Caco-2 (cell line): ENCODE measurements at regions of chr3 and their contacts with region 1.

Region 1: GRCh38 chr3:141218162-141218835 is 13.3 kb upstream of the PXYLP1 start:
- DNase-seq: no peak
- H3K4me3 ChIP-seq: no peak overlapping the region
- H3K4me3 Mint-ChIP-seq: no peak overlapping the region
- H3K27ac Mint-ChIP-seq: no peak overlapping the region
- H3K4me1 ChIP-seq: 0 out of 2 replicates have a peak, but pooled peaks cover 5% of the 10 kb centered on the region
- H3K4me1 Mint-ChIP-seq: peaks cover 15% of the 10 kb centered on the region
- H3K27me3 ChIP-seq: no peaks in the 10 kb centered on the region
- H3K27me3 Mint-ChIP-seq: no peaks in the 10 kb centered on the region
- CTCF ChIP-seq: no peak

Region 2: GRCh38 chr3:141049681-141050080 is 168.6 kb before region 1 on chr3:
- CTCF ChIA-PET with region 1: no interaction called
- POLR2A ChIA-PET with region 1: interaction called, 16 read pairs
- intact Hi-C with region 1: no loop called
- DNase-seq: peak in 1 of 2 experiments; percentile 23
- H3K4me3 ChIP-seq: no peak overlapping the region
- H3K4me3 Mint-ChIP-seq: no peak overlapping the region
- H3K27ac Mint-ChIP-seq: no peak overlapping the region
- H3K4me1 ChIP-seq: no peaks in the 10 kb centered on the region
- H3K4me1 Mint-ChIP-seq: no peaks in the 10 kb centered on the region
- H3K27me3 ChIP-seq: no peaks in the 10 kb centered on the region
- H3K27me3 Mint-ChIP-seq: peaks cover 3% of the 10 kb centered on the region
- CTCF ChIP-seq: peak in 1 of 2 experiments; percentile 18

Region 3: DNA sequence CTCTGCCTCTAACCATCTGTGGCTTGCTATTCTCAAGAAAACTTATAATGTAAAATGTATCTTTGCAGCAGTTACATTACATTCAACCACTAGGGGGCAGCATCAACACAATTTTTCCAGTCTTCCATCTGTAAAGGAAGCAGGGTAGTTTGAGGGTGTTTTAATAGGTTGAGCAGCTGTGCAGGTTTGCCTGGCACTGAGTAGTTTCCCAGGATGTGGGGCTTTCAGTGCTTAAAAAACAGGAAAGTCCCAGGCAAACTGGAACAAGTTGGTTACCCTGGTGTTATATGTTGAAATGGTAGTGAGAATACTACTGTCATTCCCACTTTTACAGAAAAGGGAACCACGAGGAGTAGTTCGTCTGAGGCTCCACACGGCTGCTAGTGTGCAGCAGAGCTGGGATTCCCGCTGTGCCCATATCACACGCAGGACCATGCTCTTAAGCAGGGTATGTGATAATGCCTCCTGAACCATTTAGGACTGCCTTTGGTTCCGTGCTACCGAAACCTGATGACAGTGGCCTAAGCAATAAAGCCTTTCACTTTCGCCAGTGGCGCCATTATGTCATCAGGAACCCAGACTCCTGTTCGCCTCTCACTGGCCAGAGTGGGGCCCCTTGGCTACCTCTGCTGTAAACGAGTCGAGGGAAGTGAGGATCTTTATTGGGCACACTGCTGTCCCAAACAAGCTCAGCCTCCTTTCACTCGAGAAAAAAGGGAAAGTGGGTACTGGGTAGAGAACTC is 85.4 kb after region 1 on chr3:
- CTCF ChIA-PET with region 1: no interaction called
- POLR2A ChIA-PET with region 1: no interaction called
- intact Hi-C with region 1: no loop called
- DNase-seq: peak; percentile 56 to 77
- H3K4me3 ChIP-seq: no peak overlapping the region
- H3K4me3 Mint-ChIP-seq: no peak overlapping the region
- H3K27ac Mint-ChIP-seq: no peak overlapping the region
- H3K4me1 ChIP-seq: no peaks in the 10 kb centered on the region; the same call in 1 of the 2 replicates
- H3K4me1 Mint-ChIP-seq: no peaks in the 10 kb centered on the region
- H3K27me3 ChIP-seq: no peaks in the 10 kb centered on the region
- H3K27me3 Mint-ChIP-seq: no peaks in the 10 kb centered on the region
- CTCF ChIP-seq: peak; percentile 61 to 68